Transverse colon (tissue), 4 donors: ENCODE measurements at regions of chr16 and their contacts with region 1.

Region 1: GRCh38 chr16:62294213-62294972 is 258.2 kb upstream of the CDH8 start:
- DNase-seq: no peak
- H3K4me3 ChIP-seq: no peak overlapping the region
- H3K27ac ChIP-seq: no peak overlapping the region
- H3K4me1 ChIP-seq: no peaks in the 10 kb centered on the region
- H3K27me3 ChIP-seq: no peaks in the 10 kb centered on the region
- CTCF ChIP-seq: no peak
- EP300 ChIP-seq: no peak
- POLR2A ChIP-seq: no peak

Region 2: GRCh38 chr16:63145411-63145810 is 851.0 kb after region 1 on chr16:
- in situ Hi-C with region 1: no loop called
- intact Hi-C with region 1: loop called (anchors 5 kb)
- DNase-seq: no peak
- H3K4me3 ChIP-seq: no peak overlapping the region
- H3K27ac ChIP-seq: no peak overlapping the region
- H3K4me1 ChIP-seq: no peaks in the 10 kb centered on the region
- H3K27me3 ChIP-seq: no peaks in the 10 kb centered on the region
- CTCF ChIP-seq: no peak
- EP300 ChIP-seq: no peak
- POLR2A ChIP-seq: no peak